Activated T-helper 2 cell treated with anti-CD3 and anti-CD28 coated beads, Interferon-gamma antibody, Interleukin-2, Interleukin-4, amounts not matched to agents 10 μg/mL and 5 μg/mL and 100 μg/mL, durations not matched to agents 14 hours and 24 hours and 36 hours (primary cell): ENCODE measurements at regions of chr20 and their contacts with region 1.

Region 1: GRCh38 chr20:17558154-17558940 is 11.5 kb upstream of the DSTN start:
- DNase-seq: no peak
- H3K4me3 Mint-ChIP-seq: no peak overlapping the region
- H3K27ac Mint-ChIP-seq: peak overlapping the region; percentile 93
- H3K4me1 Mint-ChIP-seq: peaks cover 33% of the 10 kb centered on the region
- H3K27me3 Mint-ChIP-seq: no peaks in the 10 kb centered on the region

Region 2: DNA sequence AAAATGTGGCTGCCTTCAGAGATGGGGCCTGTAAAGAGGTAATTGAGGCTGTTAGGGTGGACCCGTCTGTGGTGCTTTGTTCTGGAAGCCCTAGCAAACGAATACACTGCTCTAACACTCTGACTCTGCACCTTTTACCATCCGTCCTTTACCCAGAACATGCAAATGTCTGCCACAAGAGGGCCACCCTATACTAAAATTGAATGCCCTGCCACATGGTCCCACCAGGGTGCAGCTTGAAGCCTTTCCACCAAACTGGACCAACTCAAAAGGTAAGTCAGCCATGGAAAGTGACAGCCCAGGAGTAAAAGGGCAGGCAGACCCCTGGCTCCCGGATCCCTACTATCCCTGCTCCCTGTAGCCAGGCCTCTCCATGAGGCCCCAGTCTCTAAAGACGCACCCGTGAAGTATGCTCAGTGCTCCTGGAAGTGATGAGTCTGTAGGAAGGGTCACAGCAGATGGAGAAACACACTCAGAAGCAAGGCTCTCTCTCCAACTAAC is 21.4 kb before region 1 on chr20:
- intact Hi-C with region 1: loop called (anchors 2 kb)
- DNase-seq: peak; percentile 61
- H3K4me3 Mint-ChIP-seq: no peak overlapping the region
- H3K27ac Mint-ChIP-seq: no peak overlapping the region
- H3K4me1 Mint-ChIP-seq: peaks cover 26% of the 10 kb centered on the region
- H3K27me3 Mint-ChIP-seq: peaks cover 22% of the 10 kb centered on the region

Region 3: DNA sequence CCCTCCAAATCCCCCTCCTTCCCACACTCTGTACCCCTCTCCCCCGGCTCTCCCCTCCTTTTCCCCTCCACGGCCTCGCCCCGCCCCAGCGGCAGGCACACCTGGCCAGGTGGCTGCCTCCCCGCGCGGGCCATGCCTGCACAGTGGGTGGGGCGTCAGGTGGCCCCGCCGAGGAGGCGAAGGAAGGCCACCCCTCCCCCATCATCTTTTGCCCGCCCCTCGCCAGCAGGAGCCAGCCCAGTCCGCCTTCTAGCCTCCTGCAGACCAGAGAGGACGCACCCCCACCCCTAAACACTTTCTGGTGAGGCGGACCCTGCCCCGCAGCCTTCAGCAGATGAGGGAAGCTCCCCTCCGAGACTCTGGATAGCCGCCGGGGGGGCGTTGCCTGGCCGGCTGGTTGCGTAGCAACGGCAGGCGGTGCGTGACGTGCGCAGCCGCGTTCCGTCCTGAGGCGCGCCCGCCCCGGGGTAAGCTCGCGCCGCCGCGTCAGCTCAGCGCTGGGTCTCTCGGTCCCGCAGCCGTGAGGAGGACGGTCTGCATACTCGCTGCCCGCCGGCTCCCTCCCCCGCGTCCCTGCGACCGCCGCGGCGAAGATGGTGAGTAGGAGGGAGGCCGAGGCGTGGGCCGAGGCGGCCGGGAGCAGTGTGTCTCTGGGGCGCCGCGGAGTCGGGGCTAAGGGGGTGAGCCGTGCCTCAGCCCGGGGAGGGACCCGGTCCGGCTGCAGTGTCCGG is 11.4 kb after region 1 on chr20 and contains the start of gene DSTN:
- intact Hi-C with region 1: loop called (anchors 1 kb)
- DNase-seq: peak; percentile 85
- H3K4me3 Mint-ChIP-seq: peak within 1 kb of the TSS; percentile 93
- H3K27ac Mint-ChIP-seq: peak within 1 kb of the TSS; percentile 90
- H3K4me1 Mint-ChIP-seq: peaks cover 22% of the 10 kb centered on the region
- H3K27me3 Mint-ChIP-seq: peaks cover 9% of the 10 kb centered on the region
- total RNA-seq, gene DSTN: 61.2 and 64.3 TPM in 2 replicates

Region 4: GRCh38 chr20:17595518-17596255 is 37.3 kb after region 1 on chr20:
- intact Hi-C with region 1: no loop called
- DNase-seq: no peak
- H3K4me3 Mint-ChIP-seq: no peak overlapping the region
- H3K27ac Mint-ChIP-seq: no peak overlapping the region
- H3K4me1 Mint-ChIP-seq: peaks cover 5% of the 10 kb centered on the region
- H3K27me3 Mint-ChIP-seq: no peaks in the 10 kb centered on the region

Region 5: GRCh38 chr20:17662333-17663039 is 104.1 kb after region 1 on chr20:
- intact Hi-C with region 1: loop called (anchors 5 kb)
- DNase-seq: no peak
- H3K4me3 Mint-ChIP-seq: no peak overlapping the region
- H3K27ac Mint-ChIP-seq: peak overlapping the region; percentile 61
- H3K4me1 Mint-ChIP-seq: peaks cover 60% of the 10 kb centered on the region
- H3K27me3 Mint-ChIP-seq: no peaks in the 10 kb centered on the region